CD14-positive monocyte (primary cell): ENCODE measurements at regions of chr21 and their contacts with region 1.

Region 1: GRCh38 chr21:17780539-17780938 is 38.6 kb downstream of the C21orf91 start:
- DNase-seq: peak; percentile 55 to 89 (median 82)
- H3K4me3 ChIP-seq: peak overlapping the region in 1 of 3 experiments; percentile 29
- H3K4me3 Mint-ChIP-seq: peak overlapping the region; percentile 13 to 60
- H3K27ac ChIP-seq: peak overlapping the region; percentile 44 to 70
- H3K27ac Mint-ChIP-seq: peak overlapping the region; percentile 61 to 87 (median 79)
- H3K4me1 ChIP-seq: peaks cover 78 to 82% of the 10 kb centered on the region in 2 donors
- H3K4me1 Mint-ChIP-seq: peaks cover 78% of the 10 kb centered on the region
- H3K27me3 ChIP-seq: no peaks in the 10 kb centered on the region
- H3K27me3 Mint-ChIP-seq: peaks cover 0 to 6% (median 1%) of the 10 kb centered on the region in 3 donors
- CTCF ChIP-seq: no peak

Region 2: DNA sequence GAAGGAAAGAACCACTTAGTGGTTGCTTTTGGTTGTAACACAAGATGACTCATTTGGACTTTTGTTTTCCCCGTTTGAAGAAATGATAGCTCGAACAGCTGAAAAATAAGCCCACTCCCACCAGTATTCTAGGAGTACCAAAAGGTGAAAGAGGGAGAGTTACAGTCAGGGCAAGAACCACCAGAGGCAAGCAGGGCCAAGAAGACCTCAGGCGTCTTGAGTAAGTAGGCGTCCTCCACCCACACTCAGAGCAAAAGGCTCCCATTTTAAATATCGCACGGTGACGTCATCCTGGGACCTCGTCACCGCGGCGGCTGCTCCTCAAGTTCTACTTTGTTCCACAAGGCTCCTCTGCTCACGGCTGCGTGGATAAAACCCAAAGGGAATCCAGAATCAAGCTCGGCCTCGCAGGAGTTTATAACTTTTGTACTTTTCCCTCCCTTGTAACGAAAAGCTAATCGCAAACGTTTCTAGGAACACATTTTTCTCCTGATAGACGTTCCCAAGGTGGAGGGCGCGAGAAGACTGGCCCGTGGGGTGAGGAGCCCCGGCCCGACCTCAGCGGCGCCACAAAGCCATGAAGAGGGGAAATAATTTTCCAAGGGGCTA is 169.0 kb before region 1 on chr21:
- intact Hi-C with region 1: loop called in 1 of 2 experiments (anchors 10 kb)
- DNase-seq: peak; percentile 77 to 87 (median 82)
- H3K4me3 ChIP-seq: peak overlapping the region; percentile 74 to 84 (median 77)
- H3K4me3 Mint-ChIP-seq: peak overlapping the region; percentile 98 to 99
- H3K27ac ChIP-seq: peak overlapping the region; percentile 35 to 66
- H3K27ac Mint-ChIP-seq: peak overlapping the region; percentile 84 to 98 (median 96)
- H3K4me1 ChIP-seq: peaks cover 10 to 15% of the 10 kb centered on the region in 2 donors
- H3K4me1 Mint-ChIP-seq: peaks cover 14% of the 10 kb centered on the region
- H3K27me3 ChIP-seq: no peaks in the 10 kb centered on the region
- H3K27me3 Mint-ChIP-seq: peaks cover 5 to 15% (median 8%) of the 10 kb centered on the region in 3 donors
- CTCF ChIP-seq: no peak

Region 3: DNA sequence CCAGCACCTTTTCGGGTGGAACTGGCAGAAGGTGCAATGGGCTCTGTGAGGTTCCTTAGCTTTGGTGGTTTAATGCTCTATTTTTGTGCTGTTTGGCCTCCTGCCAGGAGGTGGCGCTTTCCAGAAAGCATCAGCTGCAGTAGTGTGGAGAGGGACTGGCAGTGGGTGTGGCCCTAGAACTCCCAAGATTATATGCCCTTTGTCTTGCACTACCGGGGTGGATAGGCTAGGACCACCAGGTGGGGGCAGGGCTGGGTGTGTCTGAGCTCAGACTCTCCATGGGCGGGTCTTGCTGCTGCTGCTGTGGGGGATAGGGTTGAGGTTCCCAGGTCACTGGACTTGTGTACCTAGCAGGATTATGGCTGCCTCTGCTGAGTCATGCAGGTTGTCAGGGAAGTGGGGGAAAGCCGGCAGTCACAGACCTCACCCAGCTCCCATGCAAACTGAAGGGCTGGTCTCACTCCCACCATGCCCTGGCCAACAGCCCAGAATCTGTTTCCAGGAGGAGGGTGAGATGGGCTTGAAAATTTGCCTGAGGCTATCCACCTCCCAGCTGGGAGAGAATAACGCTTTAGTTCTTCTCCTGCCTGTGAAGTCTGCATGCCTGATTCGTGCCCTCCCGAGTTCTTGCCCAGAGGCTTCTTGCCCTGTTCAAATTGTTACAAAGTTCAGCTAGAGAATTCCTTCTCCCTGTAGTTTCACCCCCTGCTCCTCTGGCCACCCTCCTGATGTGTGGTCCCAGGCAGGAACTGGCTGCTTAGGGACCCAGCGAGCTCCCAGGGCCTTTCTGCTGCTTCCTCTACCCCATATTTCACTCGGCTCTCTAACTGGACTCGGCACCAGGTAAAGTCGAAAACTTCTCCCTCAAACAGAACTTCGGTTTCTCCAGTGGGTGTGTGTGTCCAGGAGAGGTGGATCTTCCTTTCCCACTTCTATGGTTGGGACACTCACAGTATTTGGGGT is 91.3 kb before region 1 on chr21:
- intact Hi-C with region 1: no loop called
- DNase-seq: peak; percentile 2 to 17 (median 7)
- H3K4me3 ChIP-seq: peak overlapping the region in 1 of 3 experiments; percentile 24
- H3K4me3 Mint-ChIP-seq: peak overlapping the region; percentile 44 to 52
- H3K27ac ChIP-seq: no peak overlapping the region
- H3K27ac Mint-ChIP-seq: no peak overlapping the region
- H3K4me1 ChIP-seq: peaks cover 6 to 7% of the 10 kb centered on the region in 2 donors
- H3K4me1 Mint-ChIP-seq: peaks cover 13% of the 10 kb centered on the region
- H3K27me3 ChIP-seq: no peaks in the 10 kb centered on the region
- H3K27me3 Mint-ChIP-seq: peaks cover 0 to 4% (median 0%) of the 10 kb centered on the region in 3 donors
- CTCF ChIP-seq: peak; percentile 71